ENCODE measurements at regions of chr7 and their contacts with region 1.

Region 1: DNA sequence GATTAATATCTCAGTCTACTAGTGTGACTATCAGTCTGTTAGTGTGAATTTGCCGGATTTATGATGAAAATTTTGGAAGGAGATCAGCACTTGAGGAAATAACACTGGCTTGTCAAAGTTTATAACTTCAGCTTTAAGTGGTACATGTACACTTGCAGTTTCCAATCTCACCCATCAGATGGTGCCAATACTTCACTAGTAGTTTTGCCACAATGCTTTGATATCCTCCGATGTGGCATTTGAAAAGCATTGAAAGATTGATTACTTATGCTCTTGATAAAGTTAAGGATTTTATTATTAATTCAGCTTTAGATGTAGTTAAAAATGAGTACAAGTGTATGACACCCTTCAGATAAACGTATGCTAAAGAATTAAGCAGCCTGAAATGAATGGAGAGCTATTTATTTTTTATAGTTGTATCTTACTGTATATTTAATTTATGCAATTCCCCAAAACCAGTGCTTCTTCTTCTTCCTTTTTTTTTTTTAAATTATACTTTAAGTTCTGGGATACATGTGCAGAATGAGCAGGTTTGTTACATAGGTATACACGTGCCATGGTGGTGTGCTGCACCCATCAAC is 98.2 kb downstream of the ANLN start:
- DNase-seq: peak in 4 of 7 donors; percentile 13 to 43 (median 29)
- H3K4me3 ChIP-seq: no peak overlapping the region
- H3K27ac ChIP-seq: no peak overlapping the region
- H3K4me1 ChIP-seq: no peaks in the 10 kb centered on the region
- H3K27me3 ChIP-seq: no peaks in the 10 kb centered on the region
- CTCF ChIP-seq: peak; percentile 29 to 85 (median 78)
- POLR2A ChIP-seq: no peak

Region 2: GRCh38 chr7:36670585-36671431 is 183.0 kb after region 1 on chr7:
- intact Hi-C with region 1: loop called (anchors 5 to 10 kb)
- DNase-seq: peak; percentile 32 to 82 (median 62)
- H3K4me3 ChIP-seq: no peak overlapping the region
- H3K27ac ChIP-seq: no peak overlapping the region
- H3K4me1 ChIP-seq: no peaks in the 10 kb centered on the region
- H3K27me3 ChIP-seq: no peaks in the 10 kb centered on the region
- CTCF ChIP-seq: peak; percentile 73 to 83 (median 82)
- POLR2A ChIP-seq: no peak

Region 3: GRCh38 chr7:37149051-37149772 is 661.4 kb after region 1 on chr7:
- intact Hi-C with region 1: no loop called
- DNase-seq: no peak
- H3K4me3 ChIP-seq: no peak overlapping the region
- H3K27ac ChIP-seq: no peak overlapping the region
- H3K4me1 ChIP-seq: no peaks in the 10 kb centered on the region
- H3K27me3 ChIP-seq: no peaks in the 10 kb centered on the region
- CTCF ChIP-seq: no peak
- POLR2A ChIP-seq: no peak

Region 4: GRCh38 chr7:37201003-37201875 is 713.4 kb after region 1 on chr7:
- intact Hi-C with region 1: loop called (anchors 5 to 10 kb)
- DNase-seq: peak; percentile 79 to 95 (median 88)
- H3K4me3 ChIP-seq: no peak overlapping the region
- H3K27ac ChIP-seq: peak overlapping the region in 4 of 5 donors; percentile 29 to 73 (median 60)
- H3K4me1 ChIP-seq: peaks cover 5 to 25% of the 10 kb centered on the region in 2 donors
- H3K27me3 ChIP-seq: no peaks in the 10 kb centered on the region
- CTCF ChIP-seq: peak; percentile 83 to 90 (median 86)
- POLR2A ChIP-seq: no peak

Measured in adrenal gland (tissue), 19 donors.